ENCODE measurements at regions of chr13 and their contacts with region 1.

Region 1: GRCh38 chr13:23466144-23467002 is 32.9 kb upstream of the SACS start:
- DNase-seq: peak; percentile 80
- H3K4me3 ChIP-seq: peak overlapping the region; percentile 56 to 59
- H3K27ac ChIP-seq: peak overlapping the region; percentile 51 to 78
- H3K4me1 ChIP-seq: peaks cover 5% of the 10 kb centered on the region
- H3K27me3 ChIP-seq: no peaks in the 10 kb centered on the region
- CTCF ChIP-seq: peak; percentile 48 to 61 (median 55)
- POLR2A ChIP-seq: no peak

Region 2: GRCh38 chr13:23510979-23511735 is 44.8 kb after region 1 on chr13:
- intact Hi-C with region 1: no loop called
- DNase-seq: peak; percentile 39
- H3K4me3 ChIP-seq: no peak overlapping the region
- H3K27ac ChIP-seq: no peak overlapping the region
- H3K4me1 ChIP-seq: no peaks in the 10 kb centered on the region
- H3K27me3 ChIP-seq: no peaks in the 10 kb centered on the region
- CTCF ChIP-seq: peak in 2 of 3 experiments; percentile 12
- POLR2A ChIP-seq: no peak

Region 3: DNA sequence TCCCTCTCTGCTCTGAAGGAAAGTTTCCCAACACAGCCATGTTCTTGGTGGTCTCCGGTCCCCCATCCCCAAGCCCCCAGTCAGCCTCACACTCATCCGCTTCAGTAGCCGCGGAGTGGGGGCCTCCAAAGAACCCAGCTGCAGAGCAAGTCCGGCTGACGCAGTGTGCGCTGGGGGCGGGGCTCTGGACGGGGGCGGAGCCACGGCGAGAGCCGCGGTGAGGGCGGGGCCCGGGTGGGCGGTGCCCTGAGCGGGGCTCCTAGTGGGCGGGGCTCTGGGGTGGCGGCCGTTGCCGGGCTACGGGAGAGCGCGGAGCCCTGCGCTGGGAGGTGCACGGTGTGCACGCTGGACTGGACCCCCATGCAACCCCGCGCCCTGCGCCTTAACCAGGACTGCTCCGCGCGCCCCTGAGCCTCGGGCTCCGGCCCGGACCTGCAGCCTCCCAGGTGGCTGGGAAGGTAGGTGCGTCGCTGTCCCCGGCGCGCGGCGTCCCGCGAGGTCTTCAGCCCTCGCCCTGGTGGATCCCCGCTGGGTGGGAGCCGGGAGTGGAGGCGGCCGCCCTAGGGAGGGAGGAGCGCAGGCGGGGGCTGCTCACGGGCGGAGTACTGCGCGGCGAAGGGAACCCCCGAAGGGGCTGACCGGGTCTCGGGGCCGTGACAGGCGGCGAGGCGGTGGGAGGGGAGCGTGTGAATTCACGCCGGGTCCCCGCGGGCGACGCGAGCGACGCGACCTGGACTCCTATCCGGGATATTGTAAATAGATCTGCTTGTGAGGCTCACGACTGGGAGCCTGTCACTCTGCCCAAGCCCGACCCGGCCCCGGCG is 112.9 kb after region 1 on chr13:
- intact Hi-C with region 1: loop called (anchors 10 kb)
- DNase-seq: peak; percentile 96
- H3K4me3 ChIP-seq: peak overlapping the region; percentile 89 to 96
- H3K27ac ChIP-seq: peak overlapping the region; percentile 87 to 88
- H3K4me1 ChIP-seq: no peaks in the 10 kb centered on the region
- H3K27me3 ChIP-seq: no peaks in the 10 kb centered on the region
- CTCF ChIP-seq: no peak
- POLR2A ChIP-seq: no peak

Region 4: GRCh38 chr13:23867027-23867491 is 400.7 kb after region 1 on chr13:
- intact Hi-C with region 1: loop called (anchors 10 kb)
- DNase-seq: no peak
- H3K4me3 ChIP-seq: no peak overlapping the region
- H3K27ac ChIP-seq: no peak overlapping the region
- H3K4me1 ChIP-seq: no peaks in the 10 kb centered on the region
- H3K27me3 ChIP-seq: no peaks in the 10 kb centered on the region
- CTCF ChIP-seq: no peak
- POLR2A ChIP-seq: no peak